GM12878 (cell line): ENCODE measurements at regions of chr17 and their contacts with region 1.

Region 1: GRCh38 chr17:17344462-17345293 is 41.5 kb downstream of the NT5M start:
- DNase-seq: no peak
- ATAC-seq: no peak
- H3K4me3 ChIP-seq: no peak overlapping the region
- H3K27ac ChIP-seq: no peak overlapping the region
- H3K4me1 ChIP-seq: no peaks in the 10 kb centered on the region
- H3K27me3 ChIP-seq: no peaks in the 10 kb centered on the region
- CTCF ChIP-seq: no peak
- EP300 ChIP-seq: no peak
- POLR2A ChIP-seq: no peak
- RAD21 ChIP-seq: no peak

Region 2: DNA sequence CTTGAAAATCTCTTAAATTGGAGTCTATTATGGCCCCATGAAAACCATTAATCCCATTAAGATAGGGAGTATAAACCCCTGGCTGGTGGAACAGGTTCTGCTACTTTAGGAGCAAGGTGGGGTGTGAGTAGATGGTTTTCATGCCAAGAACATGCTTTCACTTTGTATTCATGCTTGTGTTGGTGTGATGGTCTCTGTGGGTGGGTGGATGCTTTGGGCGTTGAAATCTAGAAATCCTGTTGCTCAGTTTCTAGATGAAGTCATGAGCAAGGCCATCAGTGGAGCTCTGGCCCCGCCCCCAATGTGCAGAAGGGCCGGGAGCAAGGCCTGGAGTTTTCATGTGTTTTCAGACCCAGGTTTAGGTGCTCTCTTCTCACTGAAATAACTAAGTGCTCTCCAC is 158.6 kb before region 1 on chr17:
- CTCF ChIA-PET with region 1: no interaction called
- POLR2A ChIA-PET with region 1: no interaction called
- RAD21 ChIA-PET with region 1: no interaction called
- SMC1A ChIA-PET with region 1: no interaction called
- in situ Hi-C with region 1: no loop called
- intact Hi-C with region 1: no loop called
- DNase-seq: no peak
- ATAC-seq: peak; percentile 60
- H3K4me3 ChIP-seq: no peak overlapping the region
- H3K27ac ChIP-seq: no peak overlapping the region
- H3K4me1 ChIP-seq: peaks cover 28% of the 10 kb centered on the region
- H3K27me3 ChIP-seq: no peaks in the 10 kb centered on the region
- CTCF ChIP-seq: no peak
- EP300 ChIP-seq: no peak
- POLR2A ChIP-seq: no peak
- RAD21 ChIP-seq: no peak

Region 3: GRCh38 chr17:17361543-17361866 is 16.8 kb after region 1 on chr17:
- CTCF ChIA-PET with region 1: interaction called, 3 read pairs
- POLR2A ChIA-PET with region 1: interaction called, 13 read pairs
- RAD21 ChIA-PET with region 1: no interaction called
- SMC1A ChIA-PET with region 1: no interaction called
- in situ Hi-C with region 1: no loop called
- intact Hi-C with region 1: no loop called
- DNase-seq: no peak
- ATAC-seq: no peak
- H3K4me3 ChIP-seq: no peak overlapping the region
- H3K27ac ChIP-seq: no peak overlapping the region
- H3K4me1 ChIP-seq: no peaks in the 10 kb centered on the region; the same call in 1 of the 2 replicates
- H3K27me3 ChIP-seq: no peaks in the 10 kb centered on the region; a peak in 1 of 4 replicates
- CTCF ChIP-seq: no peak
- EP300 ChIP-seq: no peak
- POLR2A ChIP-seq: no peak
- RAD21 ChIP-seq: no peak

Region 4: DNA sequence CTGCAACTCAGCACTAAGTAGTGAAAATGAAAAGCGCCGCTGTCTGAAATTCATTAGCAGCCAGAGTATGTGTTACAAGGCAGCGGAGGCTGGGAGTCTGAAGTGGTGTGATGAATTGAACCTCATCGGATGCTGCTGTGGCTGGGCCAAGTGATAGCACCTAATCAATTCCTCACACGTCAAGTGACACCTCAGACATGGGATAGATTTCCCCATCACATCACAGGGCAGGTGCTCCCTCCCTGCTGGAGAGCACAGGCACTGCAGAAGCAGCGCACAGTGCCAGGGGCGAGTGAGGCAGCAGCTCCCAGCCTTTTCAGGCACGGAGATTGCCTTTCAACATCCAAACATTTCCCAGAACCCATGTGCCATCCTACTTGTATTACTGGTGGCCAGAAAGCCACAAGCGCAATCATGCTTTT is 660.2 kb after region 1 on chr17:
- CTCF ChIA-PET with region 1: no interaction called
- POLR2A ChIA-PET with region 1: no interaction called
- RAD21 ChIA-PET with region 1: no interaction called
- SMC1A ChIA-PET with region 1: no interaction called
- in situ Hi-C with region 1: no loop called
- intact Hi-C with region 1: loop called (anchors 10 kb)
- DNase-seq: no peak
- ATAC-seq: no peak; the same call in 2 of the 3 replicates
- H3K4me3 ChIP-seq: no peak overlapping the region
- H3K27ac ChIP-seq: no peak overlapping the region
- H3K4me1 ChIP-seq: no peaks in the 10 kb centered on the region
- H3K27me3 ChIP-seq: no peaks in the 10 kb centered on the region
- CTCF ChIP-seq: 0 out of 6 replicates have a peak, but pooled peaks of 1 of the 3 experiments have one; percentile 9
- EP300 ChIP-seq: no peak
- POLR2A ChIP-seq: no peak
- RAD21 ChIP-seq: no peak